K562 (cell line): ENCODE measurements at regions of chr7 and their contacts with region 1.

Region 1: DNA sequence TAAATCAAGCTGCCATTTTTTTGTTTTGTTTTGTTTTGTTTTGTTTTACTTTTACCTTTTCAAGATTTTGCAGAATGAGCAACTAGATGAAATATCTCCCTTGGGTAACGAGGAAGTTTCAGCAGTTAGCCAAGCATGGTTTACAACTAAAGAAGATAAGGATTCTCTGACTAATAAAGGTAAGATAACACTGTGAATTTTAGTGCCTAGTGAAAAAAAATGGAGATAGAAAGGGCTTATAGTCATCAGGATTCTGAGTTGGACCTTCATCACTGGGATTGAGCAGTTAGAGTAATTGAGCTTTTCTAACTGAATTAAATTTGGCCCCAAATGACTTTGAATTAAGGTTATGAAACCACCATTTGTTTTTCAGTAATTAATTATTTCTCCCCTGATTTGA is 21.2 kb downstream of the DMTF1 start:
- DNase-seq: no peak
- ATAC-seq: no peak
- H3K4me3 ChIP-seq: no peak overlapping the region
- H3K27ac ChIP-seq: no peak overlapping the region
- H3K4me1 ChIP-seq: no peaks in the 10 kb centered on the region
- H3K27me3 ChIP-seq: no peaks in the 10 kb centered on the region
- CTCF ChIP-seq: no peak
- EP300 ChIP-seq: no peak
- POLR2A ChIP-seq: no peak
- RAD21 ChIP-seq: no peak

Region 2: DNA sequence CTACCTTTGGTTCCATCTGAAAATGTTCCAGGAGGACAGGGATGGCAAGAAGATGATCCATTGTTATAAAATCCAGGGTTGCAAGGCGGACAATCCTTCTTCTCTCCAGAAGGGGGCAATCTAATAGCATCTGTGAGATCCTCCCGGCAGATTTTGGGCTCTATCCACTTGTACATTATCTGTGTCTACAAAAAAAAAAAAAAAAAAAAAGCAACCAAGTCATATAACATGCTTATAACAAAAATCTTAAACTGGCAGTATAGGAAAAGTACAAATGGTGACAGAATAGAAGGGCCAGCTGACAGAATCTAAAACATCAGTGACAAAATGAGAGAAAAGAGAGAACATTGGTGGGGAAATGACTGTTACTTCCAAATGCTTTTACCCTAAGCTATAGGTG is 246.7 kb before region 1 on chr7:
- CTCF ChIA-PET with region 1: no interaction called
- POLR2A ChIA-PET with region 1: no interaction called
- in situ Hi-C with region 1: no loop called
- intact Hi-C with region 1: no loop called
- DNase-seq: peak; percentile 61 to 73 (median 68)
- ATAC-seq: peak; percentile 87
- H3K4me3 ChIP-seq: no peak overlapping the region
- H3K27ac ChIP-seq: no peak overlapping the region
- H3K4me1 ChIP-seq: no peaks in the 10 kb centered on the region
- H3K27me3 ChIP-seq: no peaks in the 10 kb centered on the region
- CTCF ChIP-seq: peak; percentile 61 to 87 (median 77)
- EP300 ChIP-seq: no peak
- POLR2A ChIP-seq: no peak
- RAD21 ChIP-seq: peak; percentile 73 to 79

Region 3: GRCh38 chr7:87116315-87116714 is 57.2 kb before region 1 on chr7:
- CTCF ChIA-PET with region 1: no interaction called
- POLR2A ChIA-PET with region 1: no interaction called
- in situ Hi-C with region 1: no loop called
- intact Hi-C with region 1: no loop called
- DNase-seq: no peak
- ATAC-seq: no peak
- H3K4me3 ChIP-seq: no peak overlapping the region
- H3K27ac ChIP-seq: no peak overlapping the region
- H3K4me1 ChIP-seq: peaks cover 0 to 6% of the 10 kb centered on the region in 2 experiments; a peak in 3 of 5 replicates
- H3K27me3 ChIP-seq: no peaks in the 10 kb centered on the region
- CTCF ChIP-seq: no peak
- EP300 ChIP-seq: no peak
- POLR2A ChIP-seq: no peak
- RAD21 ChIP-seq: no peak

Region 4: DNA sequence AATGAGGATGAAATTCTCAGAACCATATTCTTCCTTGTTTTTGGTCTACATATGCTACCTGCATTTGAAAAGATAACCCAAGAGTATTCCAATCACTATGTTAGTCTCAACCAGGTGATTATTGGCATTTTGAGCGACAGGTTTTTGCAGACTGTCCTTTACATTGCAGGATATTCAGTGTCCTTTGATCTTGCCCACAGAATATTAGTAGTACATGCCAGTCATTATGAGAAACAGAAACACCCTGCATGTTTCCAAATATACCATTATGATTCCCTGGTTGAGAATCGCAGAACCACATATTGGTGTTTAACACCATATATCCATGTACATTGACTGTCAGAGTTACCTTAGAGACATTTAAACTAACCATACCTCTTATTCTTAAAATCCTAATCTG is 15.5 kb after region 1 on chr7:
- CTCF ChIA-PET with region 1: no interaction called
- POLR2A ChIA-PET with region 1: interaction called, 10 read pairs
- in situ Hi-C with region 1: no loop called
- intact Hi-C with region 1: no loop called
- DNase-seq: no peak
- ATAC-seq: no peak
- H3K4me3 ChIP-seq: no peak overlapping the region
- H3K27ac ChIP-seq: no peak overlapping the region
- H3K4me1 ChIP-seq: no peaks in the 10 kb centered on the region
- H3K27me3 ChIP-seq: no peaks in the 10 kb centered on the region
- CTCF ChIP-seq: no peak
- EP300 ChIP-seq: no peak
- POLR2A ChIP-seq: no peak
- RAD21 ChIP-seq: no peak

Region 5: DNA sequence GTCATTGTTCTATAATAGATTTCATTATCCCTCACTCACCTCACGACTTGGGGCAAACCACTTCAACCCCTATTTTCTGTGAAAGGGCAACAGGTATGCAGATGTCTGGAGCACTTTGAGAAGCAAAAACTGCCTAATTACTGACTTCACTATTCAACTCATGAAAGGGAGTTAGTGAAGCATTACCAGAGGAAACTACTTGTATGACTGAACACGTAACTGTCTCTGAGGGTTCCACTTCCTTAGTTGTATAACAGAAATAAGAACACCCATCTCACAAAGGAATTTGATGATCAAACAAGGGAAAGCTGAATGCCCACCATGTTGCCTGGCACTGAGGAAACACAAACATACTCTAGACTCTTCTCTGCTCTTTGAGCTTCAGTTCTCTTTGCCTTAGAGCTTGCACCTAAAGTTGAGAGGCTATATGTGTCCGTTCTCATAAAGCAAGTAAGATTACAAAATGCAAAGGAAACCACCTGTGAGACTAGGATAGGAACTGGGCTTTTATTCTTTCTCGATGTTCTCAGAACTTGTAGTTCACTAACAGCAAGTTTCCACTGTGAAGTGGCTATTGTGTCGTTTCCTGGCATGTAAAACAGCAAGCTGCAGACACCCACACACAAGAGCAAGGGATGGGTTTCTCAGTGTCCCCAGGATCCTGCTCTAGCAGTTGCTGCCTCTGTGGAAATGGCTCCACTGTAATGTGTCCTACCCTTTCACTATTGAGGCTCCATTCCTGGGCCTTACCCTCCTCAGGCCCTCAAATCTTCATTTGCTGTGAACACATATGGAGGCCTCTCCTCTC is 43.4 kb after region 1 on chr7:
- CTCF ChIA-PET with region 1: no interaction called
- POLR2A ChIA-PET with region 1: no interaction called
- in situ Hi-C with region 1: no loop called
- intact Hi-C with region 1: no loop called
- DNase-seq: no peak
- ATAC-seq: no peak
- H3K4me3 ChIP-seq: no peak overlapping the region
- H3K27ac ChIP-seq: no peak overlapping the region
- H3K4me1 ChIP-seq: peaks cover 13 to 18% of the 10 kb centered on the region in 2 experiments
- H3K27me3 ChIP-seq: peaks cover 16 to 25% of the 10 kb centered on the region in 2 experiments; a peak in 4 of 5 replicates
- CTCF ChIP-seq: no peak
- EP300 ChIP-seq: no peak
- POLR2A ChIP-seq: no peak
- RAD21 ChIP-seq: no peak